Activated CD4-positive, alpha-beta T cell treated with anti-CD3 and anti-CD28 coated beads for 36 hours (primary cell): ENCODE measurements at regions of chr19 and their contacts with region 1.

Region 1: DNA sequence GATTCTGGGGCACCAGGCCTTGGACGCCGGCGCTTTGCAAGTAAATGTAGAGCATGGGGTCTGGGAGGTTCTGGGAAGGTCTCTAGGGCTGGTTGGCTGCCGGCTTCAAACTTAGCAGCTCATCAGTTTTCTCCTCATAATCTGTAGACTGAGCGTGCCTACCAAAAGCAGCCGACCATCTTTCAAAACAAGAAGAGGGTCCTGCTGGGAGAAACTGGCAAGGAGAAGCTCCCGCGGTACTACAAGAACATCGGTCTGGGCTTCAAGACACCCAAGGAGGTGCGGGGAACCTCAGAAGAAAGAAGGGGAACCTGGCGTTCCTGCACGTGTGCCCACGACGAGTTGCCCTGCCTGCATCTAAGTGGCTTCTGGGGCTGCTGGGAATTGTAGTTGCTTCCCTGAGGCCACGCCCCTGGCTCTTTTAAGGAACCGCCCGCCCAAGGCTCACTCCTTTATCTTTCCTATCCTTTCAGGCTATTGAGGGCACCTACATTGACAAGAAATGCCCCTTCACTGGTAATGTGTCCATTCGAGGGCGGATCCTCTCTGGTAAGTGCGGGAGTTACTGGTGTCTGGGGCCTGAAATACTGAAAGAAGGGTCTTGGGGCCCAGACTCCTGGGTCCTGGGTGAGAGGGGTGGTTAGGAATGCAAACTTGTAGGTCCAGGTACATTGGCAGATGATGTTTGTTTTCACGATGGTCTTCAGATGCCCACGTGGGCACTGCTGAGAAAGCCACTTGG is 984 bp downstream of the RPS11 start:
- DNase-seq: peak; percentile 86
- ATAC-seq: peak; percentile 5
- H3K4me3 Mint-ChIP-seq: peak overlapping the region; percentile 93
- H3K27ac Mint-ChIP-seq: peak overlapping the region; percentile 98
- H3K4me1 Mint-ChIP-seq: peaks cover 47% of the 10 kb centered on the region
- H3K27me3 Mint-ChIP-seq: no peaks in the 10 kb centered on the region

Region 2: DNA sequence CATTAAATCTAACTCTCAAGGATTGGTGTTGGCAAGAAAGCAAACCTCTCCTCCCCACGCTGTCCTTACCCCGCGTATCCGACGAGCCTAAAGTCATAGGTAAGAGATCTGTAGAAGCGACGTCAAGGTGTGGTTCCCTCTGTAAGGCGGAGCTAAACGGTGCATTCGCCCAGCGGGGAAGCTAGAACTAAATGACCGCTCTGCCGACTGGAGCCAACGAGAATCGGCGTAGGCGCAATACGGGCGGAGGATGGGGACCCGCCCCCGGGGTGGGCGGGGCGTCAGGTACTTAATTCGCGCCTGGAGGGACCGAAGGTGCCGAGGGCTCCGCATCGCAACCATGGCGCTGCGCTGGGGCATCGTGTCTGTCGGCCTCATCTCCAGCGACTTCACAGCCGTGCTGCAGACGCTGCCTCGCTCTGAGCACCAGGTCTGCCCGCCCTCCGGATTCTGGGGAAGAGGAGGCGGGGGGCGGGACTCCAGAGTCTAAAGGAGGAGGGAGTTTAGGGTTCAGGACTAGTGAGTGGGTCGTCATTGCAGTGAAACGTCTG is 563.8 kb before region 1 on chr19 and contains the start of gene DHDH:
- CTCF ChIA-PET with region 1: no interaction called
- POLR2A ChIA-PET with region 1: no interaction called
- intact Hi-C with region 1: no loop called
- DNase-seq: peak; percentile 90
- ATAC-seq: peak; percentile 92
- H3K4me3 Mint-ChIP-seq: peak within 1 kb of the TSS; percentile 74
- H3K27ac Mint-ChIP-seq: peak within 1 kb of the TSS; percentile 48
- H3K4me1 Mint-ChIP-seq: peaks cover 10% of the 10 kb centered on the region
- H3K27me3 Mint-ChIP-seq: peaks cover 2% of the 10 kb centered on the region
- total RNA-seq, gene DHDH: 1.4 to 2.4 TPM

Region 3: DNA sequence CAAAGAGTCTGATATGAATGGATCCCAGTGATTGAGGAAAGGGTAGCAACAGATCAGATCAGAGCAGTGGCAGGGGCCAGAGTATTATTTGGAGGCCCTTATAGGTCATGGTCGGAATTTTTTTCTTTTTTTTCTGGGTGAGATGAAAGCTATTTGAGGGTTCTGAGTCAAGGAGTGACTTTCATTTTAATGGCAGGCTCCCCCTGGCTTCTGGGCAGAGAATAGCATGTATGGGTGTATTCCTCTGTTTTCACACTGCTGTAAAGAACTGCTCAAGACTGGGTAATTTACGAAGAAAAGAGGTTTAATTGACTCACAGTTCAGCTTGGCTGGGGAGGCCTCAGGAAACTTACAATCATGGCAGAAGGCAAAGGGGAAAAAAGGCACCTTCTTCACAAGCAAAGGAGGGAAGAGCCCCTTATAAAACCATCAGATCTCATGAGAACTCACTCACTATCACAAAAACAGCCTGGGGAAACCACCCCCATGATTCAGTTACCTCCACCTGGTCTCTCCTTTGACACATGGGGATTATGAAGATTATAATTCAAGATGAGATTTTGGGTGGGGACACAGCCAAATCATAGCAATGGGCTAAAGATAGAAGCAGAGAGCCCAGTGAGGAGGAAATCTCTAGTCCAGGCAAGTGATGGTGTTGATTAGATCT is 169.2 kb before region 1 on chr19:
- CTCF ChIA-PET with region 1: no interaction called
- POLR2A ChIA-PET with region 1: no interaction called
- intact Hi-C with region 1: no loop called
- DNase-seq: peak; percentile 75
- ATAC-seq: peak; percentile 27
- H3K4me3 Mint-ChIP-seq: no peak overlapping the region
- H3K27ac Mint-ChIP-seq: peak overlapping the region; percentile 69
- H3K4me1 Mint-ChIP-seq: peaks cover 51% of the 10 kb centered on the region
- H3K27me3 Mint-ChIP-seq: no peaks in the 10 kb centered on the region

Region 4: DNA sequence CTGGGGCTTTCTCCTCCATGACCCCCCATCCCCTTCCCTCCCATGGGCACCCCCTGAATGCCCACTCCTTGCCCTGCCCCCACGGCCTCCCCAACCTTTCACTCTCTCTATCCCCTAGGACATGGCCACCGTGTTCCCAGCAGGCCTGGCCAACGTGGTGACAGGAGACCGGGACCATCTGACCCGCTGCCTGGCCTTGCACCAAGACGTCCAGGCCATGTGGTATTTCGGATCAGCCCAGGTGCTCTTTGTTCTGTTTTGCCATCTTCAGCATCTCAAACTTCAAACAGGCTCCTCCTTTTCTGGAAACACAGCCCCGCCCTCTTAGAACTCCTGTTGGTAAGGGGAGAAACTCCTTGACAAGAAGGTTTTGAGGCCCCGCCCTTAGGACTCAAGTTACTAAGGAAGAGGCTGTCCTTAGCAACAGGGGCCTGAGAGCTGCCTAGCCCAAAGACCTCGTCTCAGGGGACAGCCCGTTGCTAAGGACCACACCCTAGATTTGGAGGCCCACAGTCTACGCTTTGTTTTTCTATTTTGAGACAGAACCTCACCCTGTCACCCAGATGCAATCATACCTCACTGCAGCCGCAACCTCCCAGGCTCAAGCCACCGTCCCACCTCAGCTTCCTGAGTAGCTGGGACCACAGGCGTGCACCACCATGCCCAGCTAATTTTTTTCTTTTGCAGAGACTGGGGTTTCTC is 28.3 kb before region 1 on chr19:
- CTCF ChIA-PET with region 1: interaction called, 6 read pairs
- POLR2A ChIA-PET with region 1: interaction called, 3 read pairs
- intact Hi-C with region 1: loop called in 1 of 2 experiments (anchors 1 kb)
- DNase-seq: peak; percentile 88
- ATAC-seq: peak; percentile 75
- H3K4me3 Mint-ChIP-seq: peak overlapping the region; percentile 64
- H3K27ac Mint-ChIP-seq: peak overlapping the region; percentile 98
- H3K4me1 Mint-ChIP-seq: peaks cover 49% of the 10 kb centered on the region
- H3K27me3 Mint-ChIP-seq: no peaks in the 10 kb centered on the region

Region 5: DNA sequence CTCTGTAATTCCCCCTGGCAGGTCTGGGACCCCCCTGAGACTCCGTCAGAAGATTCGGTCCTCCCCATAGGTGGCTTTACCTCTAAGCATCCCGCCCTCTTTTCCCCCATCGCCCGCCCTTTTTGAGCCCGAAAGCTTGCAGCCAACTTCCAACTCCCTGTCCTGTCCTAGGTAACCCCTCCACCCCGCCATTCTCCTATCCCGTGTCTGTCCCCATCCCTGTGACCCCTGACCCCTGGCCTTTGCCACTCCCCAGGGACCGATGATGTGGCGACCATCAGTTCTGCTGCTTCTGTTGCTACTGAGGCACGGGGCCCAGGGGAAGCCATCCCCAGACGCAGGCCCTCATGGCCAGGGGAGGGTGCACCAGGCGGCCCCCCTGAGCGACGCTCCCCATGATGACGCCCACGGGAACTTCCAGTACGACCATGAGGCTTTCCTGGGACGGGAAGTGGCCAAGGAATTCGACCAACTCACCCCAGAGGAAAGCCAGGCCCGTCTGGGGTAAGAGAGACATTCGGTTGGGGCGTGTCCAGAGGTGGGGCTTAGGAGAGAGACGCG is 31.1 kb after region 1 on chr19:
- CTCF ChIA-PET with region 1: interaction called, 3 read pairs
- POLR2A ChIA-PET with region 1: interaction called, 6 read pairs
- intact Hi-C with region 1: loop called in 1 of 2 experiments (anchors 1 kb)
- DNase-seq: peak; percentile 29
- ATAC-seq: no peak
- H3K4me3 Mint-ChIP-seq: peak overlapping the region; percentile 73
- H3K27ac Mint-ChIP-seq: no peak overlapping the region
- H3K4me1 Mint-ChIP-seq: peaks cover 18% of the 10 kb centered on the region
- H3K27me3 Mint-ChIP-seq: no peaks in the 10 kb centered on the region

Region 6: GRCh38 chr19:49570138-49570856 is 73.1 kb after region 1 on chr19:
- CTCF ChIA-PET with region 1: interaction called, 40 read pairs
- POLR2A ChIA-PET with region 1: no interaction called
- intact Hi-C with region 1: no loop called
- DNase-seq: peak; percentile 82
- ATAC-seq: peak; percentile 54
- H3K4me3 Mint-ChIP-seq: peak overlapping the region; percentile 16
- H3K27ac Mint-ChIP-seq: peak overlapping the region; percentile 76
- H3K4me1 Mint-ChIP-seq: peaks cover 56% of the 10 kb centered on the region
- H3K27me3 Mint-ChIP-seq: no peaks in the 10 kb centered on the region

Region 7: DNA sequence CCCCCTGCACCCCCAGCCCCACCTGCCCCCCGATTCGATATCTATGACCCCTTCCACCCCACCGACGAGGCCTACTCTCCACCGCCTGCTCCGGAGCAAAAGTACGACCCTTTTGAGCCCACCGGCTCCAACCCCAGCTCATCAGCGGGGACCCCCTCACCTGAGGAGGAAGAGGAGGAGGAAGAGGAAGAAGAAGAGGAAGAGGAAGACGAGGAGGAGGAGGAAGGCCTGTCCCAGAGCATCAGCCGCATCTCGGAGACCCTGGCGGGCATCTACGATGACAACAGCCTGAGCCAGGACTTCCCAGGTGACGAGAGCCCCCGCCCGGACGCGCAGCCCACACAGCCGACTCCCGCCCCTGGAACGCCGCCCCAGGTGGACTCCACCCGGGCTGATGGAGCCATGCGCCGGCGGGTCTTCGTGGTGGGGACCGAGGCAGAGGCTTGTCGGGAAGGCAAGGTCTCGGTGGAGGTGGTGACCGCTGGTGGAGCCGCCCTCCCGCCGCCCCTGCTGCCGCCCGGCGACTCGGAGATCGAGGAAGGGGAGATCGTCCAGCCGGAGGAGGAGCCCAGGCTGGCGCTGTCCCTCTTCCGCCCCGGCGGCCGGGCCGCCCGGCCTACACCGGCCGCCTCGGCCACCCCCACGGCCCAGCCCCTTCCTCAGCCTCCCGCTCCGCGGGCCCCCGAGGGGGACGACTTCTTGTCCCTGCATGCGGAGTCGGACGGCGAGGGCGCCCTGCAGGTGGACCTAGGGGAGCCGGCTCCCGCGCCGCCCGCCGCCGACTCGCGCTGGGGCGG is 154.0 kb after region 1 on chr19:
- CTCF ChIA-PET with region 1: no interaction called
- POLR2A ChIA-PET with region 1: no interaction called
- intact Hi-C with region 1: no loop called
- DNase-seq: no peak
- ATAC-seq: no peak
- H3K4me3 Mint-ChIP-seq: no peak overlapping the region
- H3K27ac Mint-ChIP-seq: no peak overlapping the region
- H3K4me1 Mint-ChIP-seq: no peaks in the 10 kb centered on the region
- H3K27me3 Mint-ChIP-seq: no peaks in the 10 kb centered on the region

Region 8: DNA sequence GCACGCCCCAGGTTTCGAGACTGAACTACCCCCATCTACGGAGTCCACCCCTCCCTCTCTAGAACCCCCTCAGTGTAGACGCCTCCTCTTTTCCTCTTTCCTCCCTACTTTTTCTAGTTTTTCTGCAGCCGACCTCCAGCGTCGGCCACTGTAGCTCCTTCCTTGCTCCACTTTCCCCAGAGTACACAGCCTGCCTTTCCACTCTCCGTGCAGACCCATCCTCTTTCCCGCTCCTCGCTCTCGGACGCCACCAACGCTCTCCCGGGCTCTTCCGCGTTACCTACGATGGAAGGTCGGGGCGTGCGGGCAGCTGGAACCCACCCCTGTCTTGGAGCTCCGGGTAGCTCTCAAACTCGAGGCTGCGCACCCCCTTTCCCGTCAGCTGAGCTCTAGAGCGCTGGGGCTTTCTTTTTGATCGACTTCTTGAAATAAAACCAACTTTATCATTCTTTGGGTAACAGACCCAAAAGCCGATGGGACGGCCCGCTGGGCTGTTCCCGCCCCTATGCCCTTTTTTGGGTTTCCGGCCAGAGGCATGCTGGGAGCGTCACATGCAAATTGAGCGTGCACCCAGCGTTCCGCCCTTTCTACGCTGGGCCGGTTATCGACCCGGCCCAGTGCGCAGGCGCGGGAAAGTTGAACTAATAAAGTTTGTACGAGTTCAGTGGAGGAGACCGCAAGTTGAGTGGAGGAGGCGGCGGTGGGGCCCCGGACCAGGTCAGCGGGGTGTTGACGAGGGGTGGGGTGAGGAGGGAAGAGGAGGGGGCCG is 168.3 kb after region 1 on chr19 and contains the starts of genes BCL2L12 and IRF3:
- CTCF ChIA-PET with region 1: no interaction called
- POLR2A ChIA-PET with region 1: interaction called, 3 read pairs
- intact Hi-C with region 1: loop called in 1 of 2 experiments (anchors 1 kb)
- DNase-seq: peak; percentile 100
- ATAC-seq: peak; percentile 86
- H3K4me3 Mint-ChIP-seq: peak within 1 kb of the TSS; percentile 96
- H3K27ac Mint-ChIP-seq: peak within 1 kb of the TSS; percentile 92
- H3K4me1 Mint-ChIP-seq: peaks cover 29% of the 10 kb centered on the region
- H3K27me3 Mint-ChIP-seq: no peaks in the 10 kb centered on the region
- total RNA-seq, gene BCL2L12: 79.6 to 93.8 TPM
- total RNA-seq, gene IRF3: 123 to 125 TPM

Region 9: DNA sequence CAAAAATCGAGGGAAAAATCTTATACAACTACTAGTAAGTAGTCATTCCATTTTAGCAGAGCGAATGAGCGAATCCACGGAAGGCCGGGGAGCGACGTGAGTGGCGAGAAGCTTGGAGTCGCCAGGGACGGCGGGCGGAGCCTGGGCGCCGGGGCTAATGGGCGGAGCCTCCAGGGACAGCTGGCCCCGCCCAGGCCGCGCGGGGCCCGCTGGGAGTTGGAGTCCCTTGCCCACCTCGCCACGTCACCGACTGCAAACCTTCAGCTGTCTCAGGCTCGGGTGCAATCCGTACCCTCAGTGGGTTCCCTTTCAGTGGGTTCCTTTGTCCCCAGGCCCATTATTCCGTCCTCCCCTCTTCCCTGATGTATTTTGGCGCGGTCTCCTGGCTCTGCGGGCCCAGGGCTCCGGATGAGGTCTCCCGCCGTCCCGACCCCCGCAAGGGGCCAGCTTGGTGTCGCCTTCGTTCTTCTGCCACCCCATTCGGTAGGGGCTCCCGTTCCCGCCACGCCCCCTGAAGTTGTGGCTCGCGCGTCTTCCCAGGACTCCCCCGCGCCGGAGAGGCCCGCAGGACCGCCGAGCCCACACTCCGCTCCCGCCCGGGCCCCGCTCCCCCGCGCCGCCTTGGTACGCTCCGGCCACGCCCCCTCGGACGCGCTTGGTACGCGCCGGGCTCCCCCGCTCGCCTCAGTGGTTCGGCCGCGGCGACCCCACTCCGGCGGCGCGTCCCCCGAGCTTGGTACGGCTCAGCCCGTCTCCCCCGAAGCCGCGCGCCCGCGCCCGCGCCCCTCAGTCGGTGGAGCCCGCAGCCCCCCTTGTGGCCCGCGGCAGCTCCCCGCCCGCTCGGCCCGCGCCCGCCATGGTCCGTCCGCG is 353.5 kb after region 1 on chr19 and contains the start of gene PTOV1:
- CTCF ChIA-PET with region 1: no interaction called
- POLR2A ChIA-PET with region 1: no interaction called
- intact Hi-C with region 1: loop called in 1 of 2 experiments (anchors 2 kb)
- DNase-seq: peak; percentile 95
- ATAC-seq: peak; percentile 91
- H3K4me3 Mint-ChIP-seq: peak within 1 kb of the TSS; percentile 85
- H3K27ac Mint-ChIP-seq: peak within 1 kb of the TSS; percentile 91
- H3K4me1 Mint-ChIP-seq: peaks cover 36% of the 10 kb centered on the region
- H3K27me3 Mint-ChIP-seq: no peaks in the 10 kb centered on the region
- total RNA-seq, gene PTOV1: 76.9 to 104 TPM